ENCODE measurements at regions of chr13 and their contacts with region 1.

Region 1: DNA sequence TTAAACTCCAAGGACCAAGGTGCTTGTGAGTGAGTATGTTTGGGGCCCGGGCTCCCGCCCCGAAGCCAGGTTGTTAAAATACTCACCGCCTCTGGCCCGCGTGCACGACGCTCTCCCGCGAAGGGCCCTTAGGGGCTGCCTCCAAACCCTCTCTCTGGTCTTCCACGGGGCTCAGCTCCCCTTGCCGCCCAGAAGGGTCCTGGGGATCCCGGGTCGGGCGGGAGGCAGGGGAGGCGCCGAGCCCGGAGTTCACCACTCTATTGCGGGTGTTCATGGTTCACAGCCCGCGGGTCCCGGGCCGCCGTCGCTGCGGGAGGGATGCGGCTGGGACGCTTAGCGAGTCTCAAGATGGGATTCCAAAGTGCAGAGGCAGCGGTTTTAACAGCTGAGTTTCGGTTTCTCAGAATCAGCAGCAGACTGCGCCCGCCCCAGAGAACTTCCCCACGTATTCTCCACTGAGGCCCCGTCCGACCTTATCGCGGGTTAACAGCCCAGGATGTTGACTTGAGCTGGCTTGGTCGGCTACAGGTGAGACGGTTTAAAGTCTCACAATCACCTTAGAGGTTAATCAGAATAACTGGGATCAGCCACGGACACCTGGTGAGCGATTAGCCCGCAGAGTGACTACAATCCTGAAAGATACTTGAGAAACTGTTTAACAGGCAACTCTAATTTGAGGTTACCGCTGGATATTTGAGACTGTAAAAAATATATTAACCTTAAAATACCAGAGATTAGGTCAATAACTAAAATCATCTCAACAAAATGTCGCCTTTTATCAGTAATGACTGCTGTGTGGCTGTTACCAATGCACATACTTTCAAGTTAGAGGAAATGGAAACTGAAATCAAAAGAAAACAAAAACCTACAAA is at the start of gene EPSTI1:
- DNase-seq: peak; percentile 87
- H3K4me3 Mint-ChIP-seq: peak within 1 kb of the TSS; percentile 96
- H3K27ac Mint-ChIP-seq: peak within 1 kb of the TSS; percentile 99
- H3K4me1 Mint-ChIP-seq: peaks cover 65% of the 10 kb centered on the region
- H3K27me3 Mint-ChIP-seq: no peaks in the 10 kb centered on the region
- total RNA-seq, gene EPSTI1: 128 to 135 TPM

Region 2: GRCh38 chr13:42762917-42763658 is 229.0 kb before region 1 on chr13:
- CTCF ChIA-PET with region 1: no interaction called
- POLR2A ChIA-PET with region 1: no interaction called
- DNase-seq: no peak
- H3K4me3 Mint-ChIP-seq: no peak overlapping the region
- H3K27ac Mint-ChIP-seq: no peak overlapping the region
- H3K4me1 Mint-ChIP-seq: no peaks in the 10 kb centered on the region
- H3K27me3 Mint-ChIP-seq: peaks cover 15% of the 10 kb centered on the region

Region 3: DNA sequence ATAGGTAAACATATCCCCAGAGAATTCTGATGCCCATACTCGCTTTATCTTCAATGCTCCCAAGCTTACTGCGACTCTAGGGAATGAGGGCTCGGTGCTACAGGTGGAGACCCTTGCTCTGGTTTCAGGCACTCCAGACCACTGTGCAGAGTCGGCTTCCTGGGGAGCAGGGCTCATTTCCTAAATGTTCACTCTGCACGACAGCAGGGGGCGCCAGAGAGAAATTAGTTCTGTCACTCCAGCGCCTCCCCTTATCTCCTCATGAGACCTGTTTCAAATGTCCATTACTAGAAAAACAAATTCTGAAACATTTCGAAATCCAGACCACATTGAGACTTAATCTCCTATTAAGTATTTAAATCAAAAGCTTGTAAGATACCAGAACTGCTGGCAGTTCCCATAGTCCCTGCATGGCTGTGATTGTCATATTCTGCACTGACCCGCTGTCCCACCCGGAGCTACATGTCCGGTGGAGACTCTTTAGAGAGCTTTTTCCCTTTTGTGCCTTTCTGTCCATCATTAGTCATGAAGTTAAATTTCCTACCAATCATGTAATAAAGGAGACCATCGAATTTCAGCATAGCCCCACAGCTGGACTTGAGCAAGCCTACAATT is 22.5 kb before region 1 on chr13:
- CTCF ChIA-PET with region 1: interaction called, 14 read pairs
- POLR2A ChIA-PET with region 1: interaction called, 19 read pairs
- DNase-seq: peak; percentile 79
- H3K4me3 Mint-ChIP-seq: no peak overlapping the region
- H3K27ac Mint-ChIP-seq: peak overlapping the region; percentile 49
- H3K4me1 Mint-ChIP-seq: peaks cover 28% of the 10 kb centered on the region
- H3K27me3 Mint-ChIP-seq: no peaks in the 10 kb centered on the region

Region 4: GRCh38 chr13:43023289-43023951 is 31.3 kb after region 1 on chr13 and contains the start of gene DNAJC15:
- CTCF ChIA-PET with region 1: interaction called, 10 read pairs
- POLR2A ChIA-PET with region 1: interaction called, 77 read pairs
- DNase-seq: peak; percentile 88
- H3K4me3 Mint-ChIP-seq: peak within 1 kb of the TSS; percentile 97
- H3K27ac Mint-ChIP-seq: peak within 1 kb of the TSS; percentile 87
- H3K4me1 Mint-ChIP-seq: peaks cover 37% of the 10 kb centered on the region
- H3K27me3 Mint-ChIP-seq: no peaks in the 10 kb centered on the region
- total RNA-seq, gene DNAJC15: 14.6 to 16.3 TPM

Region 5: DNA sequence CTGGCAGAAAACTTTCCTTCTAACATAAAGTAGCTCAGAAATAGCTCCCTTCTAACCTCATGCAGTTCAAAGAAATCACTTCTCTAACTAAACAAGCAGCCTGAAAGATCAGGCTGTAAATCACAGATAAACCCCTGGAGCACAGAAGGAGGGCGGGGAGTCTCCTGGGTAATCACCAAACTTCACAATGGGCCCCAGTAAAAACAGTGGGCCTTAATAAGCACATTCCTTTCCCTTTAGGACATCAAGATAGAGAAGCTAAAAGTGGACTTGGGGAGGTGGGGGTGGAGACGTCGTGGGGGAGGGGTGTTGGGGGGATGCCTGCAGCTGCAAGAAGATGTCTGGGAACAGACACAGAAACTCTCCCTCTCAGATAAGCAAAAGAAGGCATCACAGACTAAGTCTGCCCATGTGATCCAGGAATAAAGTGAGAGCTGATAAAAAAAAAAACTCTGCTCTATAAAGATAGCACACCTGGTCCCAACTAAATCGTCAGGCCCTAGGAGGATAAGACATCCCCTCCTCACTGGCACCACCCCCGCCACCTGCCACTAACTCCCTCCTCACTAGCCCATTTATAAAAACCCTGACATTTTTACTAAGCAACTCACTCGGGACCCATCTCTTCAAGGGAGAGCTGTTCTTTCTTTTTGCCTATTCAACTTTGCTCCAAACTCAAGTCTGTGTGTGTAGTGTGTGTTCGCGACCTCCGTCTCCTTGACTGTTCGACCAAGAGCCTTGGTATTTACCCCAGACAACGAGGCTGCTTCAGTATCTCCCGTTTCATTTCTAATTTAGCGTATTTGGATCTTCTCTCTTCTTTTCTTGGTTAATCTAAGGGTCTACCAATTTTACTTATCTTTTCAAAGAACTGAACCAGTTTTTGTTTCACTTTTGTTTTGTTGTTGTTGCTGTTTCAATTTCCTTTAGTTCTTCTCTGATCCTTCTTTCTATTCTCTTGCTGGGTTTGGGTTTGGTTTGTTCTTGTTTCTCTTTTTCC is 63.0 kb after region 1 on chr13:
- CTCF ChIA-PET with region 1: interaction called, 4 read pairs
- POLR2A ChIA-PET with region 1: interaction called, 18 read pairs
- DNase-seq: no peak
- H3K4me3 Mint-ChIP-seq: no peak overlapping the region
- H3K27ac Mint-ChIP-seq: no peak overlapping the region
- H3K4me1 Mint-ChIP-seq: peaks cover 32% of the 10 kb centered on the region
- H3K27me3 Mint-ChIP-seq: no peaks in the 10 kb centered on the region

Measured in activated CD4-positive, alpha-beta memory T cell treated with anti-CD3 and anti-CD28 coated beads, Interleukin-2, amount 10 ng/mL, durations not matched to agents 7 days and 5 days (primary cell).